CD4-positive, alpha-beta memory T cell (primary cell): ENCODE measurements at regions of chr2 and their contacts with region 1.

Region 1: DNA sequence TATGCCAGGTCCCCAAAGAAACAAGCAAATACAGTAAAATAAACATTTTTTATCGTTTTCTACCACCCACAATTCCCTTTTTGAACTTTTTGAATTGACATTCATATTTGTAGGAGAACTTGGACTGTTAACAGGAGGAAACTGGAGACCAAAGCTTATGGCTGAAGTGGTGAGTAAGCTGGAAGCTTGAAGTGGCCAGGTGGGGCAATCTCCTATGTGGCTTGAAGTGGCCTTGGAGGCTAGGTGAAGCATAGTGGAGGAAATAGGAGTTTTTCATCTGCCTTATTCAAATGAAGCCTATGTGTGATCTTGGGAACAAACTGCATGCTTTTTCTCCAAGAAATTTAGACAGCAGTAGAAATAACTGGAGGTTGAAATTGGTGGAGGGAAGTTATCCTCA is 962.9 kb upstream of the FANCL start:
- DNase-seq: no peak
- H3K4me3 ChIP-seq: no peak overlapping the region
- H3K4me3 Mint-ChIP-seq: no peak overlapping the region
- H3K27ac ChIP-seq: no peak overlapping the region
- H3K27ac Mint-ChIP-seq: no peak overlapping the region
- H3K4me1 ChIP-seq: no peaks in the 10 kb centered on the region
- H3K4me1 Mint-ChIP-seq: no peaks in the 10 kb centered on the region
- H3K27me3 ChIP-seq: no peaks in the 10 kb centered on the region
- H3K27me3 Mint-ChIP-seq: no peaks in the 10 kb centered on the region

Region 2: DNA sequence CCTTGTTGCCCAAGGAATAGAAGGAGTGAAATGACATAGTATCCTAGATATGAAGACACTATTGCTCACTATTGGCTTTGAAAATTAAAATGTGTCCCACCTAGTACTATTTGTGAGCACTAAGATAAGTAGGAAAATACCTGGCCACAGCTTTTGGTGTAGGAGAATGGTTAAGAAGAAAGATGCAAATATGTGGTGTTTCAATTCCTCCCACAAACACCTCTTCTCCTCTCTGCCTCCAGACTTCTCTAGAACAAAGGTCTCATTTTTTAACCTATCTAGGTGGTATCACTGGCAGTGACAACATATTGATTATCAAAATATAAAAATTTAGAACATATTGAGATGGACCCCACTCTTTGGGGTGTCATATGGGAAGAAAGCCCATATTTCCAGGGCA is 33.0 kb before region 1 on chr2:
- CTCF ChIA-PET with region 1: no interaction called
- POLR2A ChIA-PET with region 1: no interaction called
- intact Hi-C with region 1: no loop called
- DNase-seq: no peak
- H3K4me3 ChIP-seq: no peak overlapping the region
- H3K4me3 Mint-ChIP-seq: no peak overlapping the region
- H3K27ac ChIP-seq: no peak overlapping the region
- H3K27ac Mint-ChIP-seq: no peak overlapping the region
- H3K4me1 ChIP-seq: no peaks in the 10 kb centered on the region
- H3K4me1 Mint-ChIP-seq: no peaks in the 10 kb centered on the region
- H3K27me3 ChIP-seq: no peaks in the 10 kb centered on the region
- H3K27me3 Mint-ChIP-seq: no peaks in the 10 kb centered on the region

Region 3: DNA sequence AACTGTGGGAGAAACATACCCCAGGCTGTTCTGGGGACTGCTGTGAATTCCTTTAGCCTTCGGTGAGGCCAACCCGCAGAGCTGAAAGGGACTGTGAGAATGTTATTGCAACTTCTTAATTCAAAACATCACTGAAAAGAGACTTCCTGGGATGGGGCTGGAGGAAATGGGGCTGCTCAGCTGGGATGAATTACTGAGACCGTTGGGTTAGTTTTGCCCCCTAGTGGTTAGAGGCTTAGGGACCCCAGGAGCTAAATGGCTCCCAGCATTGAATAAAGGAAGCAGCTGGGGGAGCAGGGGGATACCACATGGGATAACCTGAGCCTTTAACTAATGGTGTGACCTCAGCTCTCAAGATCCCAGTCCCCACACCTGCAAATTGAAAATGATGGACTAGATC is 21.8 kb before region 1 on chr2:
- CTCF ChIA-PET with region 1: no interaction called
- POLR2A ChIA-PET with region 1: no interaction called
- intact Hi-C with region 1: no loop called
- DNase-seq: no peak
- H3K4me3 ChIP-seq: no peak overlapping the region
- H3K4me3 Mint-ChIP-seq: no peak overlapping the region
- H3K27ac ChIP-seq: no peak overlapping the region
- H3K27ac Mint-ChIP-seq: no peak overlapping the region
- H3K4me1 ChIP-seq: no peaks in the 10 kb centered on the region
- H3K4me1 Mint-ChIP-seq: no peaks in the 10 kb centered on the region
- H3K27me3 ChIP-seq: no peaks in the 10 kb centered on the region
- H3K27me3 Mint-ChIP-seq: no peaks in the 10 kb centered on the region

Region 4: GRCh38 chr2:59249441-59250306 is 45.6 kb after region 1 on chr2:
- CTCF ChIA-PET with region 1: no interaction called
- POLR2A ChIA-PET with region 1: no interaction called
- intact Hi-C with region 1: loop called (anchors 1 kb)
- DNase-seq: no peak
- H3K4me3 ChIP-seq: no peak overlapping the region
- H3K4me3 Mint-ChIP-seq: no peak overlapping the region
- H3K27ac ChIP-seq: no peak overlapping the region
- H3K27ac Mint-ChIP-seq: no peak overlapping the region
- H3K4me1 ChIP-seq: no peaks in the 10 kb centered on the region
- H3K4me1 Mint-ChIP-seq: no peaks in the 10 kb centered on the region
- H3K27me3 ChIP-seq: no peaks in the 10 kb centered on the region
- H3K27me3 Mint-ChIP-seq: no peaks in the 10 kb centered on the region